Endothelial cell of umbilical vein (primary cell): ENCODE measurements at regions of chr7 and their contacts with region 1.

Region 1: GRCh38 chr7:157138424-157139110 is at the start of gene UBE3C:
- DNase-seq: peak; percentile 94
- H3K4me3 ChIP-seq: peak within 1 kb of the TSS; percentile 70 to 87 (median 71)
- H3K27ac ChIP-seq: peak within 1 kb of the TSS; percentile 58
- H3K4me1 ChIP-seq: peaks cover 24% of the 10 kb centered on the region
- H3K27me3 ChIP-seq: no peaks in the 10 kb centered on the region
- CTCF ChIP-seq: peak in 1 of 2 donors; percentile 4
- POLR2A ChIP-seq: peak; percentile 70
- total RNA-seq, gene UBE3C: 75.9 and 77.3 TPM in 2 replicates

Region 2: GRCh38 chr7:156640257-156640948 is 498.2 kb before region 1 on chr7 and contains the start of gene RNF32:
- CTCF ChIA-PET with region 1: no interaction called
- POLR2A ChIA-PET with region 1: no interaction called
- dilution Hi-C with region 1: no loop called
- intact Hi-C with region 1: loop called (anchors 2 kb)
- DNase-seq: peak; percentile 90
- H3K4me3 ChIP-seq: peak within 1 kb of the TSS; percentile 57 to 82 (median 77)
- H3K27ac ChIP-seq: peak within 1 kb of the TSS; percentile 71
- H3K4me1 ChIP-seq: peaks cover 4% of the 10 kb centered on the region
- H3K27me3 ChIP-seq: peaks cover 2 to 6% of the 10 kb centered on the region in 2 experiments
- CTCF ChIP-seq: no peak
- POLR2A ChIP-seq: peak; percentile 60
- total RNA-seq, gene RNF32: not detected in 2 replicates

Region 3: DNA sequence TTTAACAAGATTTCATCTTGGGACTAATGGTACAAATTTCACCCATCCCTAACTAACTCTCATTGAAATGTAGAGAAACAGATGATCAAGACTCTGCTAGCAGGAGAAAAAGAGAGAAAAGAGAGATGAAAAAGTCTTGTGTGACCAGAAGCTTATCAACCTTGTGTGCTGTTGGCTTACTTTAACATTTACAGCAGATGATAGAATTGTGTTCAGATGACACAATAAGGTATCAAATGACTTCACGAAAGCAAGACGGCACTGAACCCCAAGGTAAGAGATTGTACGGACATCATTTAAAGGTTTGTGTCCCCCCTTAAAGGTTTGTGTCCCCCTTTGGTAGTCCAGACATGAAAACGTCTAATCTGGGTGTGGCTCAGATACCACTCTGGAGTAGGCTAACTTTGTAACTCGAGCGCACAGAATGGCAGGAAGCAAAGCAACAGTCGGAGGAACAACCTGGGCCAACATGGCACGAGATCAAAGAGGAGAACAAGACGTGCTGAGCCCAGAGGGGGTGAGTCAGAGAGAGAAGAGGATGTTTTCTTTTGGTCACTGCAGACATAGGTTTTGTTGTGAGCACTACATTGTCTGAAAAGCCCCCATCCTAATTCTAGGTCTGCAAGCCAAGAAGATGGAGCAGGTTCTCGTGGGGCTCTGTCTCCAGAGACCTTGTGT is 235.2 kb before region 1 on chr7:
- CTCF ChIA-PET with region 1: no interaction called
- POLR2A ChIA-PET with region 1: no interaction called
- dilution Hi-C with region 1: no loop called
- intact Hi-C with region 1: loop called (anchors 2 kb)
- DNase-seq: peak; percentile 81
- H3K4me3 ChIP-seq: no peak overlapping the region
- H3K27ac ChIP-seq: peak overlapping the region; percentile 80
- H3K4me1 ChIP-seq: peaks cover 14% of the 10 kb centered on the region
- H3K27me3 ChIP-seq: no peaks in the 10 kb centered on the region
- CTCF ChIP-seq: no peak
- POLR2A ChIP-seq: peak; percentile 34

Region 4: GRCh38 chr7:156969972-156970420 is 168.6 kb before region 1 on chr7:
- CTCF ChIA-PET with region 1: interaction called, 4 read pairs
- POLR2A ChIA-PET with region 1: no interaction called
- dilution Hi-C with region 1: no loop called
- intact Hi-C with region 1: loop called (anchors 1 kb)
- DNase-seq: peak; percentile 15
- H3K4me3 ChIP-seq: no peak overlapping the region
- H3K27ac ChIP-seq: no peak overlapping the region
- H3K4me1 ChIP-seq: no peaks in the 10 kb centered on the region
- H3K27me3 ChIP-seq: no peaks in the 10 kb centered on the region
- CTCF ChIP-seq: peak; percentile 20 to 22
- POLR2A ChIP-seq: no peak

Region 5: DNA sequence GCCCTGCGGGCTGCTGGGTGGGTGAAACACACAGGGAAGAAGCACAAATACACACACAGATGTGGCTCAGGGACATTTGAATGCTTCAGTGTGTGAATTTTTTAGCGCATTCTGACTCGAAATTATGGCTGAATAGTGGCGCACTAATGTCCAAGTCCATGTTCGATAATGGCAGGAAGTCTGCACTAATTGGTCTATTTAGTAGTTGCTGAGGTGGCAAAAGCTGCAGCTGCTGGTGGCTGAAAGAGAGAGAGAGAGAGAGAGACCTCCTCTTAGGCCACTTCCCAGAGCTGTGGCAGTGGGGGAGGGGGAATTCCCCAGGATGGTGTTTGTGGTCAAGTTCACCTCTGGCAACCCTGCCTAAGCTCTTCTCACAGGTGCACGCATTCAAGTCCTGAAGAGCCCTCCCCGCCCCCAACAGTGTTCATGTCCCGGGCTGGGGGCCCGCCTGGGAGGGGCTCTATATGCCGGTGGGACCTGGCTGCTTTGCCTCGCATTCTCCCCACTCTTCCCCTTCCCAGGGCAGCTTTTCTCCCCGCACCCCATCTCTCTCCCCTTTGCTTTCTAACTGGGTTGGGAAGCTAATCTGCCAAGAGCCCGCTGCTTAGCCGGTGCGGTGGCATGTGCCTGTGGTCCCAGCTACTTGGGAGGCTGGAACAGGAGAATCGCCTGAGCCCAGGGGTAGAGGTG is 122.1 kb before region 1 on chr7:
- CTCF ChIA-PET with region 1: no interaction called
- POLR2A ChIA-PET with region 1: no interaction called
- dilution Hi-C with region 1: no loop called
- intact Hi-C with region 1: loop called (anchors 5 kb)
- DNase-seq: no peak
- H3K4me3 ChIP-seq: no peak overlapping the region
- H3K27ac ChIP-seq: no peak overlapping the region
- H3K4me1 ChIP-seq: no peaks in the 10 kb centered on the region
- H3K27me3 ChIP-seq: peaks cover 95 to 100% of the 10 kb centered on the region in 2 experiments
- CTCF ChIP-seq: no peak
- POLR2A ChIP-seq: no peak

Region 6: DNA sequence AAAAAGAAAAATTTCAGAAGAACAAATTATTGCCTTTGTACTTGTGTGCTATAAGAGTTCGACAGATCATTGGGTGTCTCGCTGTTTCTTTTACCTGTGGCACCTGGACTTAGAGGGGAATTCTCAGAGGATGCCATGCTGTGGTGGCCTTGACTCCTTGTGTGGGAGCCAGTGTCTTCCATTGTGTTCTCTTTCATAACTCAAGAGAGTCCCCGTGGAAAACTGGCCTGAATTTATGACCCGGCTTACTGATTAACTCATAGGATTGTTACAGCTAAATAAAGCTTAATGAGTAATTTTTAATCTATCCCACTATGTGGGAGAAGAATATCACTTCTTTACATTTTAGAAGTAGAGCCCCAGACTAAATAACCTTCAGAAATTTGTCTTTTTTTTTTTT is 54.7 kb after region 1 on chr7:
- CTCF ChIA-PET with region 1: no interaction called
- POLR2A ChIA-PET with region 1: no interaction called
- dilution Hi-C with region 1: no loop called
- intact Hi-C with region 1: no loop called
- DNase-seq: no peak
- H3K4me3 ChIP-seq: no peak overlapping the region
- H3K27ac ChIP-seq: no peak overlapping the region
- H3K4me1 ChIP-seq: peaks cover 3% of the 10 kb centered on the region
- H3K27me3 ChIP-seq: no peaks in the 10 kb centered on the region
- CTCF ChIP-seq: no peak
- POLR2A ChIP-seq: no peak

Region 7: GRCh38 chr7:157336383-157337315 is 198.1 kb after region 1 on chr7 and contains the start of gene DNAJB6:
- CTCF ChIA-PET with region 1: no interaction called
- POLR2A ChIA-PET with region 1: no interaction called
- dilution Hi-C with region 1: no loop called
- intact Hi-C with region 1: loop called (anchors 2 kb)
- DNase-seq: peak; percentile 95
- H3K4me3 ChIP-seq: peak within 1 kb of the TSS; percentile 85 to 96 (median 92)
- H3K27ac ChIP-seq: peak within 1 kb of the TSS; percentile 81
- H3K4me1 ChIP-seq: peaks cover 19% of the 10 kb centered on the region
- H3K27me3 ChIP-seq: peaks cover 2 to 4% of the 10 kb centered on the region in 2 experiments
- CTCF ChIP-seq: no peak
- POLR2A ChIP-seq: peak; percentile 67
- total RNA-seq, gene DNAJB6: 135 and 138 TPM in 2 replicates